ENCODE measurements at regions of chr9 and their contacts with region 1.

Region 1: DNA sequence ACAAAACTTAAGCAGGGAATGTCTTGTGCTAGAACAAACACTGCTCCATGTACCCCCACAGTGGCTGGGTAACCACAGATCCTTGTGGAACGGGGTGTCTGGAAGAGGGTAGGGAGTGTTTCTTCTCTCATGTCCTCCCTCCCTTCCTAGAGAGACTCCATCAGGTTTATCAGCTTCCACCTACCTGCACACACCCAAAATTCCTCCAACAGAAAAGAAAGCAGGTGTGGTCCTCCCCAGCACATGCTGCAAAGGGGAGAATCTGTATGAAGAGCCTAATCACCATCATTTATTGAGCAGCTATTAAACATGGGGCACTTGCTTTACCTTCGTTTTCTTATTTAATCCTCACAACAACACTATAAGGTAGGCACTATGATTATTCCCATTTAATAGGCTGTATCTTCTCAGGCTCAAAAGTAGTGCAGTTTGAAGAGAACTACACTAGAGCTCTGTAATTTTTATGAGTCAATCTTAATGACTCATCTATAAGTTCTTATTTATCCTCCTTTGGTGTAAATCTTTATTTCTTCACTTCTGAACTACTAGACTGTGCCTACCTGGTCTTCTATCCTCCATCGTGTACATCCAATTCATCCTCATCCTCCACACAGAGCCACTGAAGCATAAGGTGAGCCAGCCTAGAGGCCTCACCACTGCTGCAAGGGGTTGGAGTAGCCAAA is 31.6 kb downstream of the C9orf40 start:
- DNase-seq: no peak
- ATAC-seq: no peak
- H3K4me3 ChIP-seq: no peak overlapping the region
- H3K27ac ChIP-seq: no peak overlapping the region
- H3K4me1 ChIP-seq: no peaks in the 10 kb centered on the region
- H3K27me3 ChIP-seq: no peaks in the 10 kb centered on the region
- CTCF ChIP-seq: no peak

Region 2: GRCh38 chr9:74875656-74876413 is 45.2 kb before region 1 on chr9:
- intact Hi-C with region 1: loop called in 1 of 10 experiments (anchors 10 kb)
- DNase-seq: no peak
- ATAC-seq: no peak
- H3K4me3 ChIP-seq: no peak overlapping the region
- H3K27ac ChIP-seq: no peak overlapping the region
- H3K4me1 ChIP-seq: no peaks in the 10 kb centered on the region
- H3K27me3 ChIP-seq: peaks cover 0 to 8% (median 0%) of the 10 kb centered on the region in 7 donors
- CTCF ChIP-seq: no peak

Region 3: GRCh38 chr9:74960563-74960962 is 39.5 kb after region 1 on chr9:
- intact Hi-C with region 1: loop called in 1 of 10 experiments (anchors 5 kb)
- DNase-seq: no peak
- ATAC-seq: no peak
- H3K4me3 ChIP-seq: no peak overlapping the region
- H3K27ac ChIP-seq: no peak overlapping the region
- H3K4me1 ChIP-seq: no peaks in the 10 kb centered on the region
- H3K27me3 ChIP-seq: no peaks in the 10 kb centered on the region
- CTCF ChIP-seq: no peak

Measured in heart right ventricle (tissue), 16 donors.